Caco-2 (cell line): ENCODE measurements at regions of chr6 and their contacts with region 1.

Region 1: DNA sequence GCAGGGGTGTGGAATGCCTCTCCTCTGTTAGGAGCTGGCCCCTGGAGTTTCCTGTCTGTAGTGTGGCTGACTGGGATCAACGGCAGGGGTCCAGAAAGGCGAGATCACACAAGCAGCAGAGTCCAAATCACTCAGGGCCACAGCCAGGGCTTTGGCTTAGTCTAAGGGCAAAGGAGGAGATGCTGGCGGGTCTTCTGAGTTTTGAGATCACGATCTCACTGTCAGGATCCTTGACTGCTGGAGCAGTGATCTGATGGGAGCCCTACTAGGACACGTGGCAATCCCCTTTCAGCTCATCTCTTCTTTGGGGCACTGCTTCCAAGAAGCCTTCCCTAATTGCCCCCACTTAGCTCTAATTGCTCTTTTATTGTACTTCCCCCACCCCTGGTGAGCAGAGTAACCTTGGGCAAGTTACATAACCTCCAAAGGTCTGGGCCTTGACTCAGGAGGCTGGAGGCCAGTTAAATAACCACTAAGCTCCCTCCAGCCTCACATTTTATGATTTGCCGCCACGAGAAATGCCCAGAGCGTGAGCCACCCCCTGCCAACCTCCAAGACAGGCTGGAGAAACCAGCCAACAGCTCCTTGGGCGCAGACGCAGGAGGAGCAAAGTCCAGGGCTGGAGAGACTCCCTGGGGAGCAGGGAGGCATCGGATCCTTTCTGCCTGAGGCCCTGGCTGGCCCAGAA is 12.0 kb downstream of the KCNK5 start:
- DNase-seq: no peak
- H3K4me3 ChIP-seq: no peak overlapping the region
- H3K4me3 Mint-ChIP-seq: no peak overlapping the region
- H3K27ac Mint-ChIP-seq: no peak overlapping the region
- H3K4me1 ChIP-seq: peaks cover 22% of the 10 kb centered on the region
- H3K4me1 Mint-ChIP-seq: peaks cover 4% of the 10 kb centered on the region
- H3K27me3 ChIP-seq: no peaks in the 10 kb centered on the region
- H3K27me3 Mint-ChIP-seq: no peaks in the 10 kb centered on the region
- CTCF ChIP-seq: no peak

Region 2: GRCh38 chr6:39169439-39170344 is 47.6 kb before region 1 on chr6:
- CTCF ChIA-PET with region 1: no interaction called
- POLR2A ChIA-PET with region 1: no interaction called
- intact Hi-C with region 1: no loop called
- DNase-seq: no peak
- H3K4me3 ChIP-seq: no peak overlapping the region
- H3K4me3 Mint-ChIP-seq: no peak overlapping the region
- H3K27ac Mint-ChIP-seq: no peak overlapping the region
- H3K4me1 ChIP-seq: peaks cover 14% of the 10 kb centered on the region
- H3K4me1 Mint-ChIP-seq: peaks cover 9% of the 10 kb centered on the region
- H3K27me3 ChIP-seq: no peaks in the 10 kb centered on the region
- H3K27me3 Mint-ChIP-seq: no peaks in the 10 kb centered on the region
- CTCF ChIP-seq: no peak

Region 3: DNA sequence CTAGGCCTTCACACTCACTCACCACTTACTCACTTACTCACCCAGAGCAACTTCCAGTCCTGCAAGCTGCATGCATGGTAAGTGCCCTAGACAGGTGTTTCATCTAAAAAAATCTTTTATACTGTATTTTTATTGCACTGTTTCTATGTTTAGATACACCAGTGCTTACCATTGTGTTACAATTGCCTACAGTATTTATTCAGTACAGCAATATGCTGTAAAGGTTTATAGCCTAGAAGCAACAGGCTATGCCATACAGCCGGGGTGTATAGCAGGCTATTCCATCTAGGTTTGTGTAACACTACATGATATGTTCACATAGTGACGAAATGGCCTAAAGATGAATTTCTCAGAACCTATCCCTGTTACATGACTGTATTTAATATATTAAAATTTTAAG is 49.1 kb after region 1 on chr6:
- CTCF ChIA-PET with region 1: interaction called, 12 read pairs
- POLR2A ChIA-PET with region 1: no interaction called
- intact Hi-C with region 1: no loop called
- DNase-seq: peak in 1 of 2 experiments; percentile 15
- H3K4me3 ChIP-seq: no peak overlapping the region
- H3K4me3 Mint-ChIP-seq: peak overlapping the region; percentile 26
- H3K27ac Mint-ChIP-seq: peak overlapping the region; percentile 63
- H3K4me1 ChIP-seq: peaks cover 58% of the 10 kb centered on the region
- H3K4me1 Mint-ChIP-seq: peaks cover 47% of the 10 kb centered on the region
- H3K27me3 ChIP-seq: no peaks in the 10 kb centered on the region
- H3K27me3 Mint-ChIP-seq: no peaks in the 10 kb centered on the region
- CTCF ChIP-seq: no peak

Region 4: GRCh38 chr6:39490108-39490507 is 272.8 kb after region 1 on chr6:
- CTCF ChIA-PET with region 1: no interaction called
- POLR2A ChIA-PET with region 1: no interaction called
- intact Hi-C with region 1: no loop called
- DNase-seq: no peak
- H3K4me3 ChIP-seq: no peak overlapping the region
- H3K4me3 Mint-ChIP-seq: no peak overlapping the region
- H3K27ac Mint-ChIP-seq: no peak overlapping the region
- H3K4me1 ChIP-seq: peaks cover 3% of the 10 kb centered on the region; the same call in 1 of the 2 replicates
- H3K4me1 Mint-ChIP-seq: no peaks in the 10 kb centered on the region
- H3K27me3 ChIP-seq: no peaks in the 10 kb centered on the region
- H3K27me3 Mint-ChIP-seq: peaks cover 13% of the 10 kb centered on the region
- CTCF ChIP-seq: no peak